Activated T-helper 1 cell treated with anti-CD3 and anti-CD28 coated beads, Interleukin-12 subunit alpha, Interleukin-12 subunit beta, Interleukin-2, Interleukin-4 antibody, amounts not matched to agents 30 ng/mL and 10 ng/mL and 1 ng/mL, durations not matched to agents 14 hours and 24 hours and 36 hours (primary cell): ENCODE measurements at regions of chr11 and their contacts with region 1.

Region 1: GRCh38 chr11:125887373-125888324 is at the start of gene HYLS1:
- DNase-seq: peak; percentile 99
- H3K4me3 Mint-ChIP-seq: peak within 1 kb of the TSS; percentile 82
- H3K27ac Mint-ChIP-seq: peak within 1 kb of the TSS; percentile 97
- H3K4me1 Mint-ChIP-seq: peaks cover 35% of the 10 kb centered on the region
- H3K27me3 Mint-ChIP-seq: peaks cover 6% of the 10 kb centered on the region
- total RNA-seq, gene HYLS1: 6.5 and 6.8 TPM in 2 replicates

Region 2: DNA sequence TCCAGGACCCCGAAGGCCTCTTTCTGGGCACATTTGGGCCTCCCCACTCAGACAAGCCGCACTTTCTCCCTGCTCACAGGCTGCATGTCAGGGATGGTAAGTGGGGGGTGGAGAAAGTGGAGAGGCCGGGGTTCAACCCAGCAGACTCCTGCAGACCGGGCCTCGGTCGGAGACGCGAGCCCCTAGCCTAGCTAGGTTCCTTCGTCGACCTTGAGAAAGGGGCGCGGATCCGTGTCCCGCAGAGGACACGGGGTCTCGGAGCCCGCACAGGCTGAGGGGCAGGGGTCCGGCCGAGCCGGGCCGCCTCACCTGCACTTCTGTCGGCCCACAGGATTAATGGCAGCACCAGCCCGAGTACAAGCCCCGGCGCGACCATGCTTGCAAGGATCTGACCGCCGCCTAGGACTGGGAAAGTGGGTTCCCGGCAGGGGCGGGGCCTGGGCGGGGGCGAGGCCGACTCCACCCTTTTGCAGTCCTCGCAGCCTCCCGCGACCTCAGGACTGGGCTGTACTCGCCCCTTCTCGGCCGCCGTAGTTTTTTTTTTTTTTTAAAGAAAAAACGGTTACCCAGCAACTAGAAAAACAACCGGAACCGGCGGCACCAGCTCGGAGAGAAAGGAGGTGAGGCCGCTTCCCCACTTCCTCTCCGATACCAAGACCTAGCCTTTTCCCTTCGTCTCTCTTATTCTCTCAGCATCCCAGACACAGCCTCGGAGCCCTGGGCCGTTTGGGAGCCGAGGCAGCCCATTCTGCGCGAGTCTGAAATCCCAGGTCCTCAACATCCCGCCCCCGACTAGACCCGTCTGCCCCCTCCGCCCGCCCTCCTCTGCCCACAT is 1214.1 kb before region 1 on chr11 and contains the starts of genes SIAE and SPA17:
- intact Hi-C with region 1: loop called (anchors 1 kb)
- DNase-seq: peak; percentile 86
- H3K4me3 Mint-ChIP-seq: peak within 1 kb of the TSS; percentile 89
- H3K27ac Mint-ChIP-seq: peak within 1 kb of the TSS; percentile 89
- H3K4me1 Mint-ChIP-seq: peaks cover 29% of the 10 kb centered on the region
- H3K27me3 Mint-ChIP-seq: peaks cover 5% of the 10 kb centered on the region
- total RNA-seq, gene SIAE: 4.9 and 5.2 TPM in 2 replicates
- total RNA-seq, gene SPA17: 1.7 and 2.4 TPM in 2 replicates

Region 3: GRCh38 chr11:124953753-124954589 is 933.7 kb before region 1 on chr11 and contains the start of gene CCDC15:
- intact Hi-C with region 1: loop called (anchors 1 kb)
- DNase-seq: peak; percentile 95
- H3K4me3 Mint-ChIP-seq: no peak within 1 kb of the TSS
- H3K27ac Mint-ChIP-seq: no peak within 1 kb of the TSS
- H3K4me1 Mint-ChIP-seq: no peaks in the 10 kb centered on the region
- H3K27me3 Mint-ChIP-seq: no peaks in the 10 kb centered on the region
- total RNA-seq, gene CCDC15: 3.1 and 3.4 TPM in 2 replicates

Region 4: GRCh38 chr11:125592305-125593112 is 295.1 kb before region 1 on chr11 and contains the start of gene STT3A:
- intact Hi-C with region 1: loop called (anchors 1 kb)
- DNase-seq: peak; percentile 98
- H3K4me3 Mint-ChIP-seq: peak within 1 kb of the TSS; percentile 98
- H3K27ac Mint-ChIP-seq: peak within 1 kb of the TSS; percentile 94
- H3K4me1 Mint-ChIP-seq: peaks cover 50% of the 10 kb centered on the region
- H3K27me3 Mint-ChIP-seq: no peaks in the 10 kb centered on the region
- total RNA-seq, gene STT3A: 164 and 171 TPM in 2 replicates

Region 5: GRCh38 chr11:125902927-125903710 is 15.5 kb after region 1 on chr11 and contains the start of gene PUS3:
- intact Hi-C with region 1: loop called (anchors 1 kb)
- DNase-seq: peak; percentile 85
- H3K4me3 Mint-ChIP-seq: peak within 1 kb of the TSS; percentile 98
- H3K27ac Mint-ChIP-seq: peak within 1 kb of the TSS; percentile 88
- H3K4me1 Mint-ChIP-seq: peaks cover 28% of the 10 kb centered on the region
- H3K27me3 Mint-ChIP-seq: peaks cover 34% of the 10 kb centered on the region
- total RNA-seq, gene PUS3: 16.5 and 23.6 TPM in 2 replicates

Region 6: GRCh38 chr11:126268708-126269579 is 381.3 kb after region 1 on chr11 and contains the starts of genes FOXRED1 and SRPRA:
- intact Hi-C with region 1: loop called (anchors 2 kb)
- DNase-seq: peak; percentile 100
- H3K4me3 Mint-ChIP-seq: peak within 1 kb of the TSS; percentile 99
- H3K27ac Mint-ChIP-seq: peak within 1 kb of the TSS; percentile 96
- H3K4me1 Mint-ChIP-seq: peaks cover 45% of the 10 kb centered on the region
- H3K27me3 Mint-ChIP-seq: no peaks in the 10 kb centered on the region
- total RNA-seq, gene FOXRED1: 52.9 and 56.5 TPM in 2 replicates
- total RNA-seq, gene SRPRA: 194 and 195 TPM in 2 replicates